Activated CD4-positive, alpha-beta memory T cell treated with anti-CD3 and anti-CD28 coated beads for 36 hours (primary cell): ENCODE measurements at regions of chr9 and their contacts with region 1.

Region 1: DNA sequence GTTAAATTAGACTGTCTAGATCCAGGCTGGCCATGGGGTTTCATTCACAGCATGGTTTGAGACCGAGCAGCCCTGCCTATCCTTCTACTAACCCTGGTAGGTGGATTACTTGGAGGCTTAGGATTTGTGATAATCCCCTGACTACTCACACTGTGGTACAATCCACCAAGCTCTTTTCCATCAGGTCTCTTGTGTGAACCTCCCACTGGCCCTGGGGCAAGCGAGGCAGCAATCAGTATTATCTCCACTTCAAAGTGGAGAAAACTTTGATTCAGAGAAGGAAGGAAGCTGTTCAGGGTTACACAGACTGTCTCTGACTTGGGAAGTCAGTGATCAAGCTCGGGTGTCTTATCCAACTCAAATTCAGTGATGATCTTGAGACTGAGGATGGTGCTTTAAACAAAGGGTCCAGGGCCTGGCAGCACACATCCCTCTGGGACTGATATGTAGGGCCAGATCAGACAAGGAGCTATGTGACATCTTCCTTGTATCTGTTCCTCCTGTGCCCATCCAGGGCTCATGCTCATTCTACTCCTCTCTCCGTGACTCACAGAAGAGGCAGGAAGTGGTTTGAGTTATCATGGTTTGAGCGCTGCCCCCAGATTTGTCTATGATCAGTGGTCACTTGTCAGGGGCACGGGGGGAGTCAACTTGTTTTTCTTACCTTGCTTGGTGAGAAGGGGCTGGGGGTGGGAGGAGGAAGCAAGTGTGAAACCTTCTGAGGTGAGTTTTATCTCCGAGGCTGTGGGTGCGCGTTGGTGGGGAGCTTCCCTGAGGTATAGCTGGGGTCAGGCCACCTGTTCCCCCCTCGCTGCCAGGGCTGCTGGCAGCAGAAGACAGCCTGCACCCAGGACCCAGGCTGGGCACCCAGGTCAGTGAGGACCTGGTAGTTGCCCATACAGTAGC is 48.6 kb downstream of the RGS3 start:
- DNase-seq: peak; percentile 89
- H3K4me3 Mint-ChIP-seq: peak overlapping the region; percentile 52
- H3K27ac Mint-ChIP-seq: peak overlapping the region; percentile 91
- H3K4me1 Mint-ChIP-seq: peaks cover 52% of the 10 kb centered on the region
- H3K27me3 Mint-ChIP-seq: peaks cover 2% of the 10 kb centered on the region

Region 2: DNA sequence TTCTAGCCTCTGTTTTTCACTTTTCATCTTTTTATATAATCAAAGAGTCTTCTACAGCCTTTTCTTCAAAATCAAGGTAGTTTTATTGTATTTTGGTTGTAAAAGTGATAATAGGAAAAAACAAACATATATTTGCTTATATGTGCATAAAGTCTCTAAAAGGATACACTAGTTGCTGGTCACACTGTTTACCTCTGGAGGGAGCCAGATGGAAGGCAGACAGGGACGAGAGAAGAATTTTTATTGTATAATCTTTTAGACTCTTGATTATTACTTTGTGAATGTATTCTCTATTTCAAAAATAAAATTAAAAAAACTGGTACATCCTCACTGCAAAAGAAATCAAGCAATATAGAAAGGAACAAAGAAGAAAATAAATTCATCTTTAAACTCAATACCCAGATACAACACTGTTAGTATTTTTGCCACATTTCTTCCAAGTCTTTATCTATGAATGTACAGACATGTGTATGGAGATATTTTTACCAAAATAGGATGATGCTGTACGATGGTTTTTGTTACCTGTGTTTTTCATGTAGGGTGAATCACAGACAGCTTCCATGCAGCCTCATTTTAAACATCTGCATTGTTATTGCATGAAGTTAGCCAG is 202.8 kb before region 1 on chr9:
- CTCF ChIA-PET with region 1: no interaction called
- POLR2A ChIA-PET with region 1: no interaction called
- intact Hi-C with region 1: no loop called
- DNase-seq: peak; percentile 32
- H3K4me3 Mint-ChIP-seq: no peak overlapping the region
- H3K27ac Mint-ChIP-seq: no peak overlapping the region
- H3K4me1 Mint-ChIP-seq: no peaks in the 10 kb centered on the region
- H3K27me3 Mint-ChIP-seq: peaks cover 3% of the 10 kb centered on the region

Region 3: GRCh38 chr9:113340017-113340699 is 172.0 kb before region 1 on chr9 and contains the start of gene WDR31:
- CTCF ChIA-PET with region 1: no interaction called
- POLR2A ChIA-PET with region 1: interaction called, 4 read pairs
- intact Hi-C with region 1: loop called (anchors 10 kb)
- DNase-seq: peak; percentile 88
- H3K4me3 Mint-ChIP-seq: peak within 1 kb of the TSS; percentile 72
- H3K27ac Mint-ChIP-seq: no peak within 1 kb of the TSS
- H3K4me1 Mint-ChIP-seq: peaks cover 27% of the 10 kb centered on the region
- H3K27me3 Mint-ChIP-seq: no peaks in the 10 kb centered on the region
- total RNA-seq, gene WDR31: 1.6 to 2.4 TPM

Region 4: GRCh38 chr9:113380869-113381378 is 131.2 kb before region 1 on chr9:
- CTCF ChIA-PET with region 1: no interaction called
- POLR2A ChIA-PET with region 1: no interaction called
- intact Hi-C with region 1: no loop called
- DNase-seq: peak; percentile 44
- H3K4me3 Mint-ChIP-seq: no peak overlapping the region
- H3K27ac Mint-ChIP-seq: no peak overlapping the region
- H3K4me1 Mint-ChIP-seq: peaks cover 6% of the 10 kb centered on the region
- H3K27me3 Mint-ChIP-seq: no peaks in the 10 kb centered on the region

Region 5: GRCh38 chr9:113446323-113446740 is 65.8 kb before region 1 on chr9:
- CTCF ChIA-PET with region 1: interaction called, 15 read pairs
- POLR2A ChIA-PET with region 1: no interaction called
- intact Hi-C with region 1: no loop called
- DNase-seq: no peak
- H3K4me3 Mint-ChIP-seq: no peak overlapping the region
- H3K27ac Mint-ChIP-seq: peak overlapping the region; percentile 55
- H3K4me1 Mint-ChIP-seq: no peaks in the 10 kb centered on the region
- H3K27me3 Mint-ChIP-seq: no peaks in the 10 kb centered on the region

Region 6: DNA sequence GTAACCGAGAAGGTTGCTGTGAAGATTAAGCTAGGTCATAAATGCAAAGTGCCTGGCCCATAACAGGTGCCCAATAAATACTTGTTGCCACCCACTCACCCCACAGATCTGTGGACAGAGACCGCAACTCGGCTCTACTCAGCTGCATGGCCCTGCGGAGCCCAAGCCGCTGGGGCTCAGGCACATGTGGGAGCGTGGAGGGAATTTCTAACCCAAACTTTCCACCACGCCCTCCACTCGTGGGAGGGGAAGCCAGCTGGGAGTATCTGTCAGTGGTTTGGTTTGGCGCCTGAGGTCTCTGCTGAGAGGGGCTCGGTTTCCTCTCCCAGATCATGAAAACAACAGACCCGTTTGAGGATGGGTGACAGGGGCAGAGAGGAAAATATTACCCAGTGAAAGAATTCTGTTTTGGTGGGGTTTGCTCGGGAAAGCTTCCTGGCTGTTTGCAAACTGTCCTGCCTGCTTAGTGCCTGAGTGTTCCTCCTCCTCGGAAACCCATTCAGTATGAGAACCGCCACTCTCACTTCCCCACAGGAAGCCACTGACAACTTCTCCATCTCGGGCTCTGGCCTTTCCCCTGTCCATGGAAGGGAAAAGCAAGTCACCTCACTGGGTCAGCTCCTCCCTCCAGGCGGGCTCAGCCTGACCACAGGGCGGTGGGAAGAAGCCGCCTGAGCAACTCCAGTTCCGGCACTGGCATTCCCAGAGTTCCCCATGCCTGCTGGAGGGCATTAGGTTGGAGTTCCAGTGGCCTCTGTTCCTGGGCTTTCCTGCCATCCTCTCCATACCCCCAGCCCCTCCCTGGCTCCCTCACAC is 11.5 kb after region 1 on chr9:
- CTCF ChIA-PET with region 1: interaction called, 9 read pairs
- POLR2A ChIA-PET with region 1: interaction called, 24 read pairs
- intact Hi-C with region 1: loop called (anchors 1 kb)
- DNase-seq: peak; percentile 80
- H3K4me3 Mint-ChIP-seq: peak overlapping the region; percentile 27
- H3K27ac Mint-ChIP-seq: peak overlapping the region; percentile 53
- H3K4me1 Mint-ChIP-seq: peaks cover 60% of the 10 kb centered on the region
- H3K27me3 Mint-ChIP-seq: no peaks in the 10 kb centered on the region

Region 7: DNA sequence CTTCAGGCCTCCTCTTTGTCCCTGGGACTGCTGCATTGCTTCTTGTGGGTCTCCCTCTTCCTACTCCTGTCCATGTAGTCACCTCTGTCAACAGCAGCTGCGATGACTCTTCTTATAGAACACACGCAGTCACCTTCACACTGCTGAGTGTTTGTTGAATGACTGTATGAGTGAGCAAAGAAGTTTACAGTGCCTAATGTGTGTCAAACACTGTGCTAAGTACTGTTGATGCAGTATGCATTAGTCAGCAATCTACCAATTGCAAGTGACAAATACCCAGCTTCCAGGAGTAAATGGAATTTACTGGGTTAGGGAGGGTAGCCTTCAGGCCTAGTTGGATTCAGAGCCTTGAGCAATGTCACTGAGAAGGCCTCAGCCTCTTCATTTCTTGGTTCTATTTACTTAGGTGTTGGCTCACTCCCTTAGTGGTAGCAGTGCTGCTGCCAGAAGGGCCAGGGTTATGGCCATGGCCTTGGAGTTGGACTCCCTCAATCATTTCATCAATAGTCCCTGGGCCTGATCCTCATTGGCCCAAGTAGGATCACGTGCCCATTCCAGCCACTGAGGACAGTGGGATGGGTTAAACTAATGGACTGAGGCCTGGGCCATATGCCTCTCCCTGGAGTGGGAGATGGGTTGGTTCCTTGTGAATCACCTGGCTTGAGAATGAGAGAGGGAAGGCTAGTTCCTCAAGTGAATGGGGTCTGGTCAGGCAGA is 44.9 kb after region 1 on chr9:
- CTCF ChIA-PET with region 1: no interaction called
- POLR2A ChIA-PET with region 1: interaction called, 4 read pairs
- intact Hi-C with region 1: loop called (anchors 1 kb)
- DNase-seq: peak; percentile 26
- H3K4me3 Mint-ChIP-seq: no peak overlapping the region
- H3K27ac Mint-ChIP-seq: peak overlapping the region; percentile 44
- H3K4me1 Mint-ChIP-seq: peaks cover 47% of the 10 kb centered on the region
- H3K27me3 Mint-ChIP-seq: no peaks in the 10 kb centered on the region